Activated T-helper 1 cell treated with anti-CD3 and anti-CD28 coated beads, Interleukin-12 subunit alpha, Interleukin-12 subunit beta, Interleukin-2, Interleukin-4 antibody, amounts not matched to agents 30 ng/mL and 10 ng/mL and 1 ng/mL, durations not matched to agents 14 hours and 24 hours and 36 hours (primary cell): ENCODE measurements at regions of chr14 and their contacts with region 1.

Region 1: GRCh38 chr14:51780006-51780692 is 80.3 kb upstream of the GNG2 start:
- DNase-seq: peak; percentile 56
- H3K4me3 Mint-ChIP-seq: no peak overlapping the region
- H3K27ac Mint-ChIP-seq: no peak overlapping the region
- H3K4me1 Mint-ChIP-seq: peaks cover 9% of the 10 kb centered on the region
- H3K27me3 Mint-ChIP-seq: peaks cover 25% of the 10 kb centered on the region

Region 2: DNA sequence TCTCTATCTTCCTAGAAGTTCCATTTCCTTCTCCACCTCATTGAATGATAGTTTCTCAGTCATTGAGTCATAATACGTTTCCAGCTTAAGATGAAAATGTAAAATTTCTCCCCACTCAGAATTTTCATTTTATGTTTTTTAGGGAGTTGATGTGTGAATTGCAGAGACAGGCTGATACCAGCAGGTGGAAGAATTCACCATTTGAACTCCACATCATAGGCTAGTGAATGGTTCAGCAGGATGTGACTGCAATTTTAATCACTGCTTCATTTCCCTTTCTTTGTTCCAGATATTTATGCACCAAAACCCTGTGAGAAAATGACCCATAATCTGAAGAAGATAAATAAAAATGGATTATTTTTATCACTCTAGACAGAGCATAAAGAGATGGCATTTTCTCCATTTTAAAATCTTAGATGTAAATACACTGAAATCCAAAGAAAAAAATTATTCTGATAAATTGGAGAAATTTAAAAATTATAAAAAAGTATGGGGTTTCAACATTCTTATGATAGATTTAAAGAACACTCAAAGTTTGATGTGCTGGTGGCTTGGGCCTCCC is 825.3 kb before region 1 on chr14:
- intact Hi-C with region 1: loop called (anchors 2 kb)
- DNase-seq: no peak
- H3K4me3 Mint-ChIP-seq: no peak overlapping the region
- H3K27ac Mint-ChIP-seq: no peak overlapping the region
- H3K4me1 Mint-ChIP-seq: no peaks in the 10 kb centered on the region
- H3K27me3 Mint-ChIP-seq: peaks cover 6% of the 10 kb centered on the region

Region 3: DNA sequence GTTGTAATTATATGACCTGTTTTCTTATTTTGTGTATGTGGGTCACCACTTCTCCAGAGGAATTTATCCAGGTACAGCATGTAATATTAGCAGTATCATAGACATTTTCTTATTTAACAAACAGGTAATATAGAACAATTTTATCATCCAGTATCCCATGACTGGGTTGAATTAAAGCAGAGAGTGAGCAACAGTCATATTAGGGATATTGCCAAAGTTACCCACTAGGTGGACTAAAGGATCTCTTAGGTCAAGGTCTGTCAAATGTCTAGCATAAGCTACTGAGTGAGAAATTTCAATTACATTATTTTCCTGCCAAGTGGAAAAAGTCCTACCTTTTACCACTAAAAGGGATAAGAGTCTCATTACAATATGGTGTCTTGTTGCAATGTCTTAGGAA is 623.1 kb before region 1 on chr14:
- intact Hi-C with region 1: loop called (anchors 10 kb)
- DNase-seq: no peak
- H3K4me3 Mint-ChIP-seq: no peak overlapping the region
- H3K27ac Mint-ChIP-seq: no peak overlapping the region
- H3K4me1 Mint-ChIP-seq: no peaks in the 10 kb centered on the region
- H3K27me3 Mint-ChIP-seq: no peaks in the 10 kb centered on the region

Region 4: DNA sequence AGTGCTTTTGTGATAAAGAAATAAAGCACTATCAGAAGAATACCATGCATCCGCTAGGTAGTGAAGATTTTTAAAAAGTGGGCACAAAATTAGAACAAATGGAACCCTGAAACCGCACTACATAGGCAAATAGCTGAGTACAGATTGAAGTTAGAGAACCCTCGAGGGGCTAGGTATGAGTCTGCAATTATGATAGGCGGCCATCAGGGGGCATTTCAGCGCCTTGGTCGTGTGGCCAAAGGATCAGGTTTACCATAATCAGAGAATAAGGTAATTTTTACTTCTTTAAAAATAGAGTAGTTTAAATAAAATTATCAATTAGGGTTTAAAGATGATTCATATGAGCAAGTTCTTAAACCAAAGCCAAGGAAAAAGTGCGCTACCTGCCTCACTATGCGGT is 410.3 kb before region 1 on chr14:
- intact Hi-C with region 1: loop called (anchors 1 kb)
- DNase-seq: no peak
- H3K4me3 Mint-ChIP-seq: no peak overlapping the region
- H3K27ac Mint-ChIP-seq: no peak overlapping the region
- H3K4me1 Mint-ChIP-seq: no peaks in the 10 kb centered on the region
- H3K27me3 Mint-ChIP-seq: peaks cover 13% of the 10 kb centered on the region

Region 5: DNA sequence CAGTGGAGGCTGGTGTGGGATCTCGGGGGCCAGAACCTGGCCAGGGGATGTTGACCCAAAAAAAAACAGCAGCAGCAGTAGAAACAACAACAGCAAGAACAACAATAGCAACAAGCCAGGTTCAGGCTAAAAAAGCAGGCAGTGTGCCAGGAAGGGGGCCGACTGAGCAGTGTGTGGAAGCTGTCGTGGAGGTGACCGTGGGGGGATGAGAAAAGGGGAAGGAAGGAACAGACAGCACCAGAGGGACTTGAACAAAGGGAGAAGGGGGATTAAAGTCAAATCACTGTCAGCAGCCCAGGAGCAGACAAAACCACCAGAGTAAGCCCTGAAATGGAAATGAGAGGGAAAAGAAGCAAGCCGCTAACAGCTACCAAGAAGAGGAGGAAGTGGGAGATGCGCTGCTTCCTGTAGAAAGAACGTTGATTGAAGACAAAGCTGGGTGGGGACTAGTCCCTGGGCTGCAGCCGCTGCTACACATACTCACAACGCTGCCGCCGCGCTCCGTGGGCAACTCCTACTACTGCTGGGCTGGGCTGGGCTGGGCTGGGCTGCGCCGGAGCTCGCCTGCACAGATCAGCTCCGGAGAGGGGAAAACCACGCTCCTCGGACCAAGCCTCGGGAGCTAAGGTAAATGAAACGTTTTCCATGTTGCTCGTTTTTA is 80.1 kb after region 1 on chr14 and contains the start of gene GNG2:
- intact Hi-C with region 1: loop called (anchors 5 kb)
- DNase-seq: peak; percentile 77
- H3K4me3 Mint-ChIP-seq: peak within 1 kb of the TSS; percentile 95
- H3K27ac Mint-ChIP-seq: peak within 1 kb of the TSS; percentile 88
- H3K4me1 Mint-ChIP-seq: peaks cover 63% of the 10 kb centered on the region
- H3K27me3 Mint-ChIP-seq: peaks cover 2% of the 10 kb centered on the region
- total RNA-seq, gene GNG2: 126 and 128 TPM in 2 replicates

Region 6: DNA sequence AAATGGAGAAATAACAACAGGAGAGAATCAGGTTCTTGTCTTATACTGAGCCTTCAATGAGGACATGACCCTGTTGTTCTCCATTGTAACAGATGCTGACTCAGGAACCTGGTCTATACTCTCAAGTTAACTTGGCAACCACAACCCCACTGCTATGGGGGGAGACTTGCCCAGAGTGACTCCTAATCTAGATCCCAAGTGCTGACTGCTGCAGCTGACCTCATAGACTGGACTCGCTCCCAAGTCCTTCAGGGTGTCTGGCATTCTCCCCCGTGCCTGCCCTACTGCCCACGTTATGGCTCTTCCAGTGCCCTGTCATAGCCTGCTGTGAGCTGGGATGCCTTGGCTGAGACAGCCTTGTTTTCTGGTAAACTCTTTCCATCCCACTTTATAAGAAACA is 251.6 kb after region 1 on chr14:
- intact Hi-C with region 1: no loop called
- DNase-seq: no peak
- H3K4me3 Mint-ChIP-seq: no peak overlapping the region
- H3K27ac Mint-ChIP-seq: no peak overlapping the region
- H3K4me1 Mint-ChIP-seq: no peaks in the 10 kb centered on the region
- H3K27me3 Mint-ChIP-seq: peaks cover 6% of the 10 kb centered on the region

Region 7: DNA sequence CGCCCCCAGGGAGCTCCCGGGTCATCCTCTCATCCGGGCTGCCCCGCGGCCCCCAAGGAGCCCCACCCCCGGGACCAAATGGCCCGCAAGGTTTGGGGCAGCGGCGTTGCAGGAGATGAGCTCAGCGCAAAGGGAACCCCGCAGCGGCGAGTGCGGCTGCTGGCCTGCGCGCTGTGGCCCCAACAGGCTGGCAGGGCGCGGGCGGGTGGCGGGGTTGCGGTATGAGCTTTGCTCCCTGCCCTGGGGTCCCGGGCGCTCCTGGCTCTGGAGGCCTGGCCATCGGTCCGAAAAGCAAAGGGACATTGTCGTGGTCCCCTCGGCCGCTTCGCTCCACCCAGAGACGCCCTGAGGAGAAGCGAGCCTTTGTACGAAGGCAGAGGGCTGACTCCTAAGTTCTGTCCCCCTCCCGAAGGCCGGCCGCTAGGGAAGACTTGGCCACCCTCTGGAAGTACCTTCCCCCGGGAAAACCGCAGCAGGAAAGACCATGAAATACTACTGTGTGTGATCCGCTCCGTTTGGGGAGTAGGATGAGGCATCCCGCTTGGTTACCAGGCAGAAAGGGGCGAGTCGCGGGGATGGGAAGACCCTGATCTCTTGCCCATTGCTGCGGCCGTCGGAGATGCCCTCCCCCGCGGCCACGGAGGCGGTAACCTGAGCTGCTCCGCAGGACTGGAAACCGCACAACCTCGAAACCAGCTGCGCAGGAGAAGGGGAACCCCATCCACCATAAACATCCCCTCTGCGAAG is 289.3 kb after region 1 on chr14:
- intact Hi-C with region 1: no loop called
- DNase-seq: no peak
- H3K4me3 Mint-ChIP-seq: peak overlapping the region; percentile 42
- H3K27ac Mint-ChIP-seq: peak overlapping the region; percentile 3
- H3K4me1 Mint-ChIP-seq: peaks cover 13% of the 10 kb centered on the region
- H3K27me3 Mint-ChIP-seq: peaks cover 49% of the 10 kb centered on the region